CD4-positive, alpha-beta memory T cell (primary cell): ENCODE measurements at regions of chr22 and their contacts with region 1.

Region 1: DNA sequence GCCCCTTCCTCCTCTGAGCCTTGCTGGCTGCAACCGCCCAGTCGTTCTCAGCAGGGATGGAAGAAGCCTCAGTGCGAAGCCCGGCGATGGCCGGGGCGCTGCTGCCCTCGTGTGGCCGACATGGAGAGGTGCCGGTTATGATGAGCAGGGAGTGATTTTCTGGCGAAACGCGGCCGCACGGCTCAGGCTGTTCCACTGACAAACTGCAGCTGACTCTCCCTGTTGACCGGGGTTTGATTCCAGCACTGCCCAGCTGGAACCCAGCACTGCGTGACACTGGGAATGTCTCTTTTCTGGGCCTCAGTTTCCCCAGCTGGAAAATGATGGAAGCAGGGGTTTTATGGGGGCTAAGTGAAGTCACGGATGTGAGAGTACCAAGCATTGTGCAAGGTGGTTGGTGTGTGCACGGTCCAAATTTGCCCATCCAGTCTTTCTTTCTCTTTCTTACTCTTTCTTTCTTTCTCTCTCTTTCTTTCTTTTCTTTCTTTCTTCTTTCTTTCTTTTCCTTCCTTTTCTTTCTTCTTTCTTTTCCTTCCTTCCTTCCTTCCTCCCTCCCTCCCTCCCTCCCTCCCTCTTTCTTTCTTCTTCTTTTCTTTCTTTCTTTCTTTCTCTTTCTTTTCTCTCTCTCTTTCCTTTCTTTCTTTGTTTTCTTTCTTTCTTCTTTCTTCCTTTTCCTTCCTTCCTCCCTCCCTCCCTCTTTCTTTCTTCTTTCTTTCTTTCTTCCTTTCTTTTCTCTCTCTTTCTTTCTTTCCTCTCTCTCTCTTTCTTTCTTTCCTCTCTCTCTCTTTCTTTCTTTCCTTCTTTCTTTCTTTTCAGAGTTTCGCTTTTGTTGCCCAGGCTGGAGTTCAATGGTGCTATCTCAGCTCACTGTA is 25.8 kb upstream of the MPPED1 start:
- DNase-seq: peak; percentile 53 to 72 (median 66)
- H3K4me3 ChIP-seq: no peak overlapping the region
- H3K4me3 Mint-ChIP-seq: peak overlapping the region in 4 of 8 donors; percentile 16 to 57 (median 34)
- H3K27ac ChIP-seq: no peak overlapping the region
- H3K27ac Mint-ChIP-seq: no peak overlapping the region
- H3K4me1 ChIP-seq: peaks cover 9% of the 10 kb centered on the region
- H3K4me1 Mint-ChIP-seq: peaks cover 6 to 16% (median 11%) of the 10 kb centered on the region in 4 donors
- H3K27me3 ChIP-seq: no peaks in the 10 kb centered on the region
- H3K27me3 Mint-ChIP-seq: peaks cover 4 to 9% of the 10 kb centered on the region in 2 donors

Region 2: DNA sequence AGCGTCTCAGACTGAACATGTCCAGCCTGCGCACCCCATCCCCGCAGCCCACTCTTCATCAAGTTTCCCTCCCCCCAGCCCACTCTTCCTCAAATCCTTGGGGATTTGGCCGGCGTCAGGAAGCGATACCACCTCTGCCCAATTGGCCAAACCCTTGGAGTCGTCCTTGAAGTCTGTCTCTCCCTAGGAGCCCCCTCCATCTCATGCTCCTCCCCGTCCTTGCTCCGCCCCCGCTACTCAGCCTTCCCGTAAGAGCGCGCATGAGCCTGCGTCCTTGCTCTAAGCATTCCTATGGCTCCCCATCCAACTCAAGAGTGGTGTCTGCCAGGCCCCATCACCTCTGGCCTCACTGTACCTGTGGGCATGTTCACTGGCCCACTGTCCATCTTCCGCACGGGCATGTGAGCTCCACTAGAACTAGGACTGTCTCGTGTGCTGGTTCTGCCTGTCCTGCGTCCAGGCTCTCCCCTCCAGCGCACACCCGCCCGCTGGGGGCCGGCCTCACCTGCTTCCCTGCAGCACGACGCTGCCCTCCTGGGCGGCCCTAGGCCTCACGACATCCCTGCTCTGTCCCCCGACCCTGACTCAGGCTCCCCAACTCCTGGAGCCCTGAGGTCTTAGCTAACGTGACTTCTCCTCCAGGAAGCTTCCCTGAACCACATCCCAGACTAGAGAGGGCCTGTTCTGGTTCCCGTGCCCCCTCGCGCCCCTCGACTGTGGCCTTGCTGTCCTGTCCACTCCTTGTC is 168.5 kb before region 1 on chr22:
- CTCF ChIA-PET with region 1: no interaction called
- POLR2A ChIA-PET with region 1: no interaction called
- intact Hi-C with region 1: no loop called
- DNase-seq: no peak
- H3K4me3 ChIP-seq: no peak overlapping the region
- H3K4me3 Mint-ChIP-seq: no peak overlapping the region
- H3K27ac ChIP-seq: no peak overlapping the region
- H3K27ac Mint-ChIP-seq: peak overlapping the region in 1 of 7 donors; percentile 51
- H3K4me1 ChIP-seq: no peaks in the 10 kb centered on the region
- H3K4me1 Mint-ChIP-seq: no peaks in the 10 kb centered on the region
- H3K27me3 ChIP-seq: no peaks in the 10 kb centered on the region
- H3K27me3 Mint-ChIP-seq: no peaks in the 10 kb centered on the region

Region 3: DNA sequence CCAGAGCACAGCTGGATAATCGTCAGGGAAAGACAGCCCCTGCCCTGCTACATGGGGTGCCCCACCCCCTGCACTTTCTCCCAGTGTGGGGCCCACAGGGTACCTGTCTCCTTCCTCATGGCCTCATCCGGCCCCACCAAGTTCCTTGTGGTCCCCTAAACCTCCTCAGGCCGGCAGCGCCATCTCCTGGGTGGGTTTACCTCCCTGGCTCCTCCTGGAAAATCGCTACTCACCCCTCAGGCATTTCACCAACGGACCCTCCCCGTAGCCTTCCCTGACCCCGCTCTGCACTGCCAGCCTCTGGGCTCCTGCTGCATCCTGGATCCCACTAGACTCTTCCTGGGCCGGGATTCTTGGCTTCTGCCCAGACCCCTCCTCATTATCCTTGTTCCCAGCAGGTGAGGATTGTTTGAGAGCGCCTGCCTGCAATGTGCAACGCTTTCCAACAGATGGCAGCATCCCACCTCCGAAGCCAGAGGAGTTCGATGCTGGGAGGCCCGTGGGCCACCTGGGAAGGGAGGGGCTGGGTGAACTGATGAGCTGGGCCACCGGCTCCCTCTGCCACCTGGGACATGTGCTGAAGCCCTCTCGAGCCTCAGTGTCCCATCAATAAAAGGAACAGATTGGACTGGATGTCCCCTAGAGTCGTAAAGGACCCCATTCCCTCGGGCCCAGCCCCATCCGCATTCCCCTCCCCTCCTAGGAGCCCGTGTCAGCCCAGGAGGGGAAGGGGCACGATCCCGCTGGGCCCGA is 154.9 kb before region 1 on chr22:
- CTCF ChIA-PET with region 1: interaction called, 15 read pairs
- POLR2A ChIA-PET with region 1: no interaction called
- intact Hi-C with region 1: no loop called
- DNase-seq: peak; percentile 50 to 59 (median 55)
- H3K4me3 ChIP-seq: no peak overlapping the region
- H3K4me3 Mint-ChIP-seq: no peak overlapping the region
- H3K27ac ChIP-seq: no peak overlapping the region
- H3K27ac Mint-ChIP-seq: peak overlapping the region in 1 of 7 donors; percentile 47
- H3K4me1 ChIP-seq: no peaks in the 10 kb centered on the region
- H3K4me1 Mint-ChIP-seq: peaks cover 2 to 5% (median 4%) of the 10 kb centered on the region in 4 donors
- H3K27me3 ChIP-seq: no peaks in the 10 kb centered on the region
- H3K27me3 Mint-ChIP-seq: peaks cover 3 to 6% of the 10 kb centered on the region in 2 donors

Region 4: GRCh38 chr22:43289976-43290721 is 95.9 kb before region 1 on chr22:
- CTCF ChIA-PET with region 1: no interaction called
- POLR2A ChIA-PET with region 1: no interaction called
- intact Hi-C with region 1: no loop called
- DNase-seq: no peak
- H3K4me3 ChIP-seq: no peak overlapping the region
- H3K4me3 Mint-ChIP-seq: no peak overlapping the region
- H3K27ac ChIP-seq: no peak overlapping the region
- H3K27ac Mint-ChIP-seq: no peak overlapping the region
- H3K4me1 ChIP-seq: peaks cover 5% of the 10 kb centered on the region
- H3K4me1 Mint-ChIP-seq: peaks cover 0 to 3% (median 0%) of the 10 kb centered on the region in 4 donors
- H3K27me3 ChIP-seq: no peaks in the 10 kb centered on the region
- H3K27me3 Mint-ChIP-seq: no peaks in the 10 kb centered on the region

Region 5: GRCh38 chr22:43945632-43946383 is 559.8 kb after region 1 on chr22:
- CTCF ChIA-PET with region 1: no interaction called
- POLR2A ChIA-PET with region 1: no interaction called
- intact Hi-C with region 1: loop called (anchors 5 kb)
- DNase-seq: peak; percentile 35 to 65 (median 44)
- H3K4me3 ChIP-seq: no peak overlapping the region
- H3K4me3 Mint-ChIP-seq: no peak overlapping the region
- H3K27ac ChIP-seq: no peak overlapping the region
- H3K27ac Mint-ChIP-seq: peak overlapping the region in 1 of 7 donors; percentile 48
- H3K4me1 ChIP-seq: no peaks in the 10 kb centered on the region
- H3K4me1 Mint-ChIP-seq: no peaks in the 10 kb centered on the region
- H3K27me3 ChIP-seq: no peaks in the 10 kb centered on the region
- H3K27me3 Mint-ChIP-seq: peaks cover 0 to 11% of the 10 kb centered on the region in 2 donors

Region 6: DNA sequence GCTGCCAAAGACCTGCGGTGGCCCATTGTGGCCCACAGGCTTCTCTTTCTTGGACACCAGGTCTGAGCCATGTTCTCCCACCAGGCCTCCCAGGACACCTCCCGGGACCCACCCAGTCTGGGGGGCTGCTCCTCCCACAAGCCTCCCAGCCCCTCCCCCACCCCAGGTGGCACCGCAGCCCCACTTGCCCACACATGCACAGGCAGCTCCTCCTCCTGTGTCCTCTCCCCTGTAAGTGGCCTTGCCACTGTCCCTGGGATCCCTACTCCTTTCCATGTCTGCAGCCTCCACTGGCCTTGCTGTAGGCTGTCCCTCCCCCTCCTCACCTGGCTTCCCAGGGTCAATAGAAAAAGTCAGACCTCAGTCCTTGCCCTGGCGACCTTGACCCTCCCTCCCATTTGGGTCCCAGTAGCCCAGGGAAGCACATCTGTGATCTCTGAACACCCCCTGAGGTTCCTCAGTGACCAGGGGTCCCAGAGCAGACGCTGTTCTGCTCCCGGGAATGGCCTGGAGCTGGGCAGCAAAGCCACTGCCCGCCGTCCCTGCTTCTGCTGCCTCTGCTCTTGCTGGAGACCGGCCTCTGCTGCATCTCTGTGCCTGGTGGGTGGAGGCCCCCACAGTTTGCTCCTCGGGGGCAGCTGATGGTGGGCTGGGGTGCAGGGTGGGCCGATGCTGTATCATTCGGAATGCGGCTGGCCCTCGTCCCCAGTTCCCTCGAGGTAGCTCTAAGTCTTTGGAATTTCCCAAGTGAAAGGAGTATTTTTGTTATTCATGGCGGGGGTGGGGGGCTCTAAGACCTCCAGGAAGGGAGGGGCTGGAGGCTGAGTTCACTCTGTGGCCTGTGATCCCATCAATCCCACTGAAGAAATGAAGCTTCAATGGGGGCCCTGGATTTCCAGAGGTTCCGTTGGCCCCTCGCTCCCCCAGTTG is 1410.0 kb after region 1 on chr22:
- CTCF ChIA-PET with region 1: no interaction called
- POLR2A ChIA-PET with region 1: no interaction called
- intact Hi-C with region 1: no loop called
- DNase-seq: no peak
- H3K4me3 ChIP-seq: no peak overlapping the region
- H3K4me3 Mint-ChIP-seq: no peak overlapping the region
- H3K27ac ChIP-seq: no peak overlapping the region
- H3K27ac Mint-ChIP-seq: no peak overlapping the region
- H3K4me1 ChIP-seq: no peaks in the 10 kb centered on the region
- H3K4me1 Mint-ChIP-seq: no peaks in the 10 kb centered on the region
- H3K27me3 ChIP-seq: no peaks in the 10 kb centered on the region
- H3K27me3 Mint-ChIP-seq: no peaks in the 10 kb centered on the region